ENCODE measurements at regions of chr9 and their contacts with region 1.

Region 1: GRCh38 chr9:128361986-128362646 is 9.1 kb upstream of the URM1 start:
- DNase-seq: peak; percentile 42
- H3K4me3 ChIP-seq: peak overlapping the region; percentile 21
- H3K27me3 ChIP-seq: no peaks in the 10 kb centered on the region
- CTCF ChIP-seq: peak; percentile 94

Region 2: GRCh38 chr9:128341435-128341849 is 20.7 kb before region 1 on chr9:
- CTCF ChIA-PET with region 1: interaction called, 11 read pairs
- POLR2A ChIA-PET with region 1: no interaction called
- DNase-seq: no peak
- H3K4me3 ChIP-seq: peak overlapping the region; percentile 68
- H3K27me3 ChIP-seq: no peaks in the 10 kb centered on the region
- CTCF ChIP-seq: peak; percentile 74

Region 3: DNA sequence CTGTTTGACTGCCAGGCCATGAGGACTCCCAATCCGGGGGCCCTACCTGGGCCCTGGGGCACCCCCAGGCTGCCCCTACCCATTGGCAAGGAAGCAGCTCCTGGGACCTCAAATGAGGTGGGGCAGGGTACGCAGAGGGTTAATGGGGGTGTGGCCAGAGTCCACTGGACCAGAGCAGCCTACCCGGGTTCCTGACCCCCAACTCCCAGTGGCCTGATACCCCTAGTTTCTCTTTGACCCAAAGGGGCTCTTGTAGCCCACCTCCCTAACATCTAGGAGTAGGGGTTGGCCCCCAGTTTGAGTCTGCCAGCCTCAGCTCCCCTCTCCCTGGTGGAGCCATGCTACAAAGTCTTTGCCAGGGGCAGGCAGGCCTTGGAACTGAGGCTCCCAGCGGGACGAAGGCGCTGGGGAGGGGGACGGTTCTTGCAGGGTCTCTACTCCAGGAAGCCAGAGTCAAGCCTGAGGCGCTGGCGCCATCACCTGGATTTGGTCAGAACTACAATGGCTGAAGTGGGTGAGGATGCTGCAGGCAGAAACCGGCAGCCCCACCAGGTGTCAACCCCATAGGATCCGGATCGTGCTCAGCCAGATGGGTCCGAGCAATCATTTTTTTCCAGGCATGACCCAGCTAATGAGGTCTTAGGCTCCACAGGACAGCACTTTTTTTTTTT is 50.1 kb after region 1 on chr9:
- CTCF ChIA-PET with region 1: interaction called, 108 read pairs
- POLR2A ChIA-PET with region 1: no interaction called
- DNase-seq: no peak
- H3K4me3 ChIP-seq: no peak overlapping the region
- H3K27me3 ChIP-seq: peaks cover 8% of the 10 kb centered on the region
- CTCF ChIP-seq: peak; percentile 69

Region 4: DNA sequence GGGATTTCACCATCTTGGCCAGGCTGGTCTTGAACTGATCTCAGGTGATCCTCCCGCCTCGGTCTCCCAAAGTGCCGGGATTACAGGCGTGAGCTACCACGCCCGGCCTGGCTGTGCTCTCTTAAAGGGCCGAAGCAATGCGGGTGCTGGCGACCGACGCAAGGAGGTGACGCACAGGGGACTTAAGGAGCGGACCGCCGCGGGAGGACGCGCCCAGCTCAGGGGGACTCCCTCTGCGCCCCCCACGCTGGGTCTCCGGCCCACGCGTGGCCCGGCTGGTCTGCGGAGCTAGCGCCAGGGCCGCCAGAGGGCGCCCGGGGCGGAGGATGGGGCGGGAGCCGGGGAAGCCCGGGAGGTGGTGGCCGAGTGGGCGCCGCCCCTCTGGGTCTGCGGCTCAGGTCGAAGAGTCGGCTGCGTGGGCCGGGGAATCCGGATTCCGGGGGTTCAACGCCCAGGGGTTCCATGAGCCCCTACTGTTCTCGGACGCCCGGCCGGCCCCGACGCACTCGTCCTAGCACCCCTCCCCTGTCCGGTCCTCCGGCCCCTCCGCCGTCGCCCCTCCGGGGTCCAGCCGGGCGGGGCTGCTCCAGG is 58.0 kb after region 1 on chr9:
- CTCF ChIA-PET with region 1: interaction called, 108 read pairs
- POLR2A ChIA-PET with region 1: no interaction called
- DNase-seq: no peak
- H3K4me3 ChIP-seq: peak overlapping the region; percentile 60
- H3K27me3 ChIP-seq: peaks cover 6% of the 10 kb centered on the region
- CTCF ChIP-seq: peak; percentile 60